Dendritic cell treated with granulocyte-macrophage colony-stimulating factor and Interleukin-4, amounts not matched to agents 40 ng/mL and 50 ng/mL, for 4 days (primary cell): ENCODE measurements at regions of chr5 and their contacts with region 1.

Region 1: DNA sequence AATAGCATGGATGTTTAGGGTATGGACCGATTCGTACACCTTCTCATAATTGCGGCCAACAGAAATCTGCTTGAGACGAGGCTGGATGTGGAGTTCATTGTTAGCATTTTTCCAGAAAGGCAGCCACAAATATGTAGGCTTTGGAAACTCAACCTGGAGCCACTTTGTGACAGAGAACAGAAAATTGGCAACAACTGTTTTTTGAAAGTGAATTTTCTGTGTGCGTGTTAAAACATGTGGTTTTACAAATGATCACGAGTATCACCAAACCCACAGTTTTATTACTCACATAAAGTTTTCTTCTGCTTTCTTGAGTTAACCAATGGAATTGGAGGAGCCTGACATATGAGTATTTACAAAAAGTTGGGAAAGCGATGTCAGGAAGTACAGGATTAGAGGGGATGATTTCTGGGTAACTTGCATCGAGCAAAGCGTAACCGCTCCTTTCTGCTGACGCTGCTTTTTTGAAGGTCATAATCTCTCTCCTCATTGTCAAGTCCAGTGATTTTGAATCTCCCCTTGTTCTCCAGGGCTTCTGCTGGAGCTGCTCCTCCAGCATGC is 138.5 kb upstream of the TAF11L2 start:
- H3K4me3 Mint-ChIP-seq: no peak overlapping the region
- H3K27ac Mint-ChIP-seq: peak overlapping the region; percentile 27
- H3K4me1 Mint-ChIP-seq: peaks cover 23% of the 10 kb centered on the region
- H3K27me3 Mint-ChIP-seq: peaks cover 41% of the 10 kb centered on the region

Region 2: GRCh38 chr5:16934123-16934522 is 425.4 kb before region 1 on chr5:
- intact Hi-C with region 1: loop called (anchors 10 kb)
- H3K4me3 Mint-ChIP-seq: no peak overlapping the region
- H3K27ac Mint-ChIP-seq: no peak overlapping the region
- H3K4me1 Mint-ChIP-seq: peaks cover 30% of the 10 kb centered on the region
- H3K27me3 Mint-ChIP-seq: peaks cover 77% of the 10 kb centered on the region

Region 3: DNA sequence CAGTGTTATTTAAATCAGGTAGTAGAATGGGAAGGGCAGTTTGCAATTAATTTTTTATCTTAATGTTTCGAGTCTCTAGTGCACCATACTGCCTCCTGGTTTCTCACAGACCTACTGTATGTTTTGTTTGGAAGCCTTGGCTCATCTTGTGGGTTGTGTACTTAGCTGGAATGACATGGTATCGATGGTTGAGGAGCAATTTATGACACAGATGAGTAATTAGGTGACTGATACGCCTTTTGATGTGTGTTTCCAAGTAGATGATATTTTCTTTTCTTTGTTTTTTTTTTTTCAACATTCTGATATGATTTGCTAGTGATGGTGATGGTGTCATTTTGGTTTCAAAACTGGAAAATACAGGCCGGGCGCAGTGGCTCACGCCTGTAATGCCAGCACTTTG is 126.0 kb before region 1 on chr5:
- intact Hi-C with region 1: loop called (anchors 5 kb)
- H3K4me3 Mint-ChIP-seq: no peak overlapping the region
- H3K27ac Mint-ChIP-seq: no peak overlapping the region
- H3K4me1 Mint-ChIP-seq: peaks cover 55% of the 10 kb centered on the region
- H3K27me3 Mint-ChIP-seq: no peaks in the 10 kb centered on the region

Region 4: DNA sequence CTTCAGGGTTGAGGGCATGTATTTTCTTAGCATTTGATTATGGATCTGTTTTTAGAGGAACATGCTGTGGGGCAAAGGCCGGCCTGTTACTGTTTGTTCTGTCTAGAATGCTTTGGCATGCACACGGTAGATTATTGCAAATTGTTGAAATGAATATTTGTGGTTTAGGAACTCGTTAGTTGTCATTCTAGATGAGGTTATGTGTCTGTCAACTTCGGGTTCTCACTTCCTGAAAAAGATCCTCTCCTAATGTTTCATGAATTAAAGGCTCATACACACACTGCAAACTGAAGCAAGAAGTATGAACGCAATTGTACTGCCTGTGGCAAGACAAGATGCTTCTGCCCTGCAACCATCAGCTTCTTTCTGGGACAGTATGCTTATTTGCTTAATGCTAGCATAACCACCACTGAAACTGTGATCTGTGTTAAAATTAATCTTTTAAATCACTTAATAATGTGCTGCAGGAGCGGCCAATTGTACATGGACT is 42.5 kb before region 1 on chr5:
- intact Hi-C with region 1: loop called (anchors 5 kb)
- H3K4me3 Mint-ChIP-seq: no peak overlapping the region
- H3K27ac Mint-ChIP-seq: no peak overlapping the region
- H3K4me1 Mint-ChIP-seq: peaks cover 48% of the 10 kb centered on the region
- H3K27me3 Mint-ChIP-seq: peaks cover 59% of the 10 kb centered on the region

Region 5: GRCh38 chr5:17381932-17382331 is 22.4 kb after region 1 on chr5:
- intact Hi-C with region 1: loop called (anchors 2 kb)
- H3K4me3 Mint-ChIP-seq: no peak overlapping the region
- H3K27ac Mint-ChIP-seq: peak overlapping the region; percentile 13
- H3K4me1 Mint-ChIP-seq: peaks cover 22% of the 10 kb centered on the region
- H3K27me3 Mint-ChIP-seq: peaks cover 39% of the 10 kb centered on the region

Region 6: GRCh38 chr5:17398439-17398838 is 38.9 kb after region 1 on chr5:
- intact Hi-C with region 1: loop called (anchors 5 kb)
- H3K4me3 Mint-ChIP-seq: no peak overlapping the region
- H3K27ac Mint-ChIP-seq: peak overlapping the region; percentile 58
- H3K4me1 Mint-ChIP-seq: peaks cover 60% of the 10 kb centered on the region
- H3K27me3 Mint-ChIP-seq: peaks cover 44% of the 10 kb centered on the region

Region 7: GRCh38 chr5:17436761-17437221 is 77.3 kb after region 1 on chr5:
- intact Hi-C with region 1: loop called (anchors 10 kb)
- H3K4me3 Mint-ChIP-seq: peak overlapping the region; percentile 63
- H3K27ac Mint-ChIP-seq: peak overlapping the region; percentile 84
- H3K4me1 Mint-ChIP-seq: peaks cover 29% of the 10 kb centered on the region
- H3K27me3 Mint-ChIP-seq: peaks cover 8% of the 10 kb centered on the region